ENCODE measurements at regions of chr6 and their contacts with region 1.

Region 1: DNA sequence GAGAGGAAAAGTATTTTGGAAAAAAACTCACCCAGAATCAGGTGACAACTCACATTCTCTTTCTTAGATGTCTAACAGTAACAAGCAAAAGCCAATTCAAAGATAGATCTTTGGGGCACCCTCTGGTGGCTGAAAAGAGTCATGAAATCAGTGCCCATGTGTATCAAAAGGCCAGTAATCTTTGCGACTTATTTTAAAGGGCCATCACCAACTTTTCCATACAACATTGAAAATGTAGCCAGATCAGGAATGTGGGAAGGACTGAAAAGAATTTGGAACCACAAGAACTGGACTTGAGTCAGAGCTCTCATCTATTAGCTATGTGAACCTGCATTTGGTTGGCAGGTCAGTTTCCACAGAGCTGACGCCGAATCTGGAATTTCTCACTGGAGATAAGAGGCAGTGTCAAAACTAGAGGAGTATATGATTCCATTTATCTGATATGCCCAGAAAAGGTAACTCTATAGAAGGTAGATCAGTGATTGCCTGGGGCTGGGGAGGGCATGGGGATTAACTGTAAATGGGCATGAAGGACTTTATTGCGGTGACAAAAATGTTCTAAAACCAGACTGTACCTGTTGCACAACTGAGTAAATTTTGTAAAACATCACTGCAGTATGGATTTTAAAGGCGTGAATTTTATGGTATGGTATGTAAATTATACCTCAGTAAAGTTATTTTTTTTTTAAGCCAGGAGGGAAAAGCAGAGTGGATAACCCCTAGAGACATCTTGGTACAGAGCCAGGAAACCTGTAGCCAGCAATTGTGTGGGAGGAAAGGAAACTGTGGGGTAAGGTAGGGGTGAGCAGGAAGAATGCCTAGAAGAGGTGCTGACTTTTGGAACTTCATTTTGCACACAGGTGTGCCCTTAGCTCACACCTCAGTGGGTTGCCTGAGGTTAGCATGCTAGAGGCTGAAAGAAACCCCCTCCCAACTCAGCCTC is 117.1 kb upstream of the ASF1A start:
- DNase-seq: peak; percentile 16 to 82 (median 67)
- ATAC-seq: peak; percentile 92
- H3K4me3 Mint-ChIP-seq: peak overlapping the region in 8 of 10 donors; percentile 17 to 78 (median 50)
- H3K27ac Mint-ChIP-seq: peak overlapping the region; percentile 7 to 83 (median 64)
- H3K4me1 Mint-ChIP-seq: peaks cover 13 to 30% (median 24%) of the 10 kb centered on the region in 4 donors
- H3K27me3 Mint-ChIP-seq: no peaks in the 10 kb centered on the region

Region 2: DNA sequence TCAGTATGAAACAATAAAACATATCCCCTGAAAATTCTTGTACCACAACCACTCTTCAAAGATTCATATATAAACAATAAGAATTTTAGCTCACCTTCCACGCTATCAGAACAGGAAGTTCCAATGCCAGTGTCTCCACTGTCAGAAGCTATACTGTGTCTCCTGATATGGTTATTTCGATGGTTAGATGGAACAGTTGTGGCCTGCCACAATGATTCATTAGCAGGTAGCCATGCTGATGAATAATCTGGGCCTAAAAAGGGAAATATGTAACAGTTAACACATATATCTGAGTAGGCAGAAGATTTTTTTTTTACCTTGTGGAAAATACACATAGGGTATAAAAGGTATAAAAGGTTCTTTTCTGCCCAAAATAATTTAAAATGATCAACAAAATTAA is 144.5 kb before region 1 on chr6:
- POLR2A ChIA-PET with region 1: no interaction called
- DNase-seq: no peak
- ATAC-seq: no peak
- H3K4me3 Mint-ChIP-seq: no peak overlapping the region
- H3K27ac Mint-ChIP-seq: no peak overlapping the region
- H3K4me1 Mint-ChIP-seq: peaks cover 20 to 61% (median 58%) of the 10 kb centered on the region in 4 donors
- H3K27me3 Mint-ChIP-seq: no peaks in the 10 kb centered on the region

Region 3: DNA sequence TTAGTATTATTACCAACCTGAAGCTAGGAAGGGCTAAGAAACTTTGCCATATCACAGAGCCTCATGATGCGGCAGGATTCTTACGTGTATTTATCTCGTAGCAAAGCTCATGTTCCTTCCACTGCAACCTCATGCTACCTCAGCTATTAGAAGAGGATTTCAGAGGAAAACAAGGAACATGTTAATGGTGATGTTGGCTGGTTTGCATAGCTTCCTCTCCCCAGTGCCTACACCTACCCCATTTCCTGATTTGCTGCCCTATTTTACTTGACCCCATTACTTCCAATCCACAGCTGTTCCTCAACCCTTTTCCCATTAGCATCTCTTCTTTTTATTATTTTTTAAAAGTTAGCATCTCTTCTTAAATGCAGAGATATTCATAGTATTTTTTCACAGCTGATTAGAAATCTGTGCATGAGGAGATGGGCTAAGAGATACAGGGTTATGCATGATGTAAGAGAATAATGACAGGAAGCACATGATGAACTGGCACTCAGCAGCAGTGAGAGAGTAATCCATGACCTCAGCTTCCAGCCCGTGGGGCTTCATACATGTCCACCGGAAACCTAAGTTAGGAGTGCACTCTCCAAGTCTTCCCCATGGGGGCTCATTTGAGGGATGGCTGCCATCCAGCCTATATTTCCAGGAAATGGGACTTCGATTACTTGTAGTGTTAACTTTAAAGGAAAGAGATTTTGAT is 11.0 kb after region 1 on chr6:
- POLR2A ChIA-PET with region 1: interaction called, 17 read pairs
- DNase-seq: no peak
- ATAC-seq: peak; percentile 47 to 88
- H3K4me3 Mint-ChIP-seq: peak overlapping the region in 2 of 10 donors; percentile 4 to 7
- H3K27ac Mint-ChIP-seq: peak overlapping the region; percentile 27 to 92 (median 78)
- H3K4me1 Mint-ChIP-seq: peaks cover 9 to 32% (median 25%) of the 10 kb centered on the region in 4 donors
- H3K27me3 Mint-ChIP-seq: no peaks in the 10 kb centered on the region

Region 4: GRCh38 chr6:118800394-118801071 is 23.7 kb after region 1 on chr6:
- POLR2A ChIA-PET with region 1: interaction called, 11 read pairs
- DNase-seq: peak; percentile 51 to 93 (median 84)
- ATAC-seq: peak; percentile 90 to 94
- H3K4me3 Mint-ChIP-seq: peak overlapping the region; percentile 30 to 83 (median 66)
- H3K27ac Mint-ChIP-seq: peak overlapping the region; percentile 82 to 95 (median 90)
- H3K4me1 Mint-ChIP-seq: peaks cover 15 to 44% (median 41%) of the 10 kb centered on the region in 4 donors
- H3K27me3 Mint-ChIP-seq: no peaks in the 10 kb centered on the region